ENCODE measurements at regions of chr17 and their contacts with region 1.

Region 1: GRCh38 chr17:63434876-63435684 is 11.0 kb downstream of the CYB561 start:
- DNase-seq: peak; percentile 62 to 76
- ATAC-seq: peak; percentile 25 to 45; a peak in 5 of 6 replicates
- H3K4me3 ChIP-seq: no peak overlapping the region
- H3K27ac ChIP-seq: peak overlapping the region; percentile 37 to 85
- H3K4me1 ChIP-seq: peaks cover 53% of the 10 kb centered on the region
- CTCF ChIP-seq: peak; percentile 23; the same call in 2 of the 3 replicates
- EP300 ChIP-seq: no peak
- POLR2A ChIP-seq: no peak
- RAD21 ChIP-seq: no peak; a peak in 1 of 5 replicates

Region 2: GRCh38 chr17:63419949-63420867 is 14.9 kb before region 1 on chr17:
- CTCF ChIA-PET with region 1: interaction called, 364 read pairs
- POLR2A ChIA-PET with region 1: no interaction called
- DNase-seq: no peak
- ATAC-seq: no peak
- H3K4me3 ChIP-seq: no peak overlapping the region
- H3K27ac ChIP-seq: no peak overlapping the region
- H3K4me1 ChIP-seq: no peaks in the 10 kb centered on the region
- CTCF ChIP-seq: no peak
- EP300 ChIP-seq: no peak
- POLR2A ChIP-seq: no peak
- RAD21 ChIP-seq: no peak

Measured in A549 (cell line).